Activated CD4-positive, alpha-beta T cell treated with anti-CD3 and anti-CD28 coated beads for 36 hours (primary cell): ENCODE measurements at regions of chr4 and their contacts with region 1.

Region 1: GRCh38 chr4:183261953-183262775 is 57.9 kb downstream of the CLDN22 start:
- DNase-seq: peak; percentile 90
- ATAC-seq: peak; percentile 97
- H3K4me3 Mint-ChIP-seq: no peak overlapping the region
- H3K27ac Mint-ChIP-seq: no peak overlapping the region
- H3K4me1 Mint-ChIP-seq: peaks cover 5% of the 10 kb centered on the region
- H3K27me3 Mint-ChIP-seq: no peaks in the 10 kb centered on the region

Region 2: GRCh38 chr4:182478475-182478874 is 783.7 kb before region 1 on chr4:
- CTCF ChIA-PET with region 1: no interaction called
- POLR2A ChIA-PET with region 1: no interaction called
- intact Hi-C with region 1: loop called in 1 of 2 experiments (anchors 5 kb)
- DNase-seq: no peak
- ATAC-seq: no peak
- H3K4me3 Mint-ChIP-seq: no peak overlapping the region
- H3K27ac Mint-ChIP-seq: no peak overlapping the region
- H3K4me1 Mint-ChIP-seq: no peaks in the 10 kb centered on the region
- H3K27me3 Mint-ChIP-seq: no peaks in the 10 kb centered on the region

Region 3: DNA sequence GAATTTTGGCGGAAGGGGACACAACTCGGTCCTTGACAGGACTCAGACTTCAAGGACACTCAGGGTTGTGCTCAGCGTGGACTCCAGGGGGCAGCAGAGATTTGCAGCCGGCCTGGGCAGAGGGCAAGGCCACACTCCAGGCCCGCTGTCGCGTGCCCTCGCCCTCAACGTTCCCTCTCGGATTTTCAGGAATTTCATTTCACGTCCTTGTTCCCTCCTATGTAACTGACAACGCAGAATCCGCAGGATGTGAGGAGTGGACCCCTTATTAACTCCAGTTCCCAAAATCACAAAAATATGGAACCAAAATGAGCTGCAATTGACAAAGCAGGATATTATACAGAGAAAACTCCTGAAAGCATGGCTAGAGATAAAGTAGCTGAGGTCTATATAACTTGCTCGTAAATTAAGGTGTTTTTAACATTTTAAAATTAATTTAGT is 323.9 kb before region 1 on chr4:
- CTCF ChIA-PET with region 1: interaction called, 56 read pairs
- POLR2A ChIA-PET with region 1: no interaction called
- intact Hi-C with region 1: loop called (anchors 1 kb)
- DNase-seq: peak; percentile 83
- ATAC-seq: peak; percentile 98
- H3K4me3 Mint-ChIP-seq: no peak overlapping the region
- H3K27ac Mint-ChIP-seq: no peak overlapping the region
- H3K4me1 Mint-ChIP-seq: peaks cover 2% of the 10 kb centered on the region
- H3K27me3 Mint-ChIP-seq: peaks cover 7% of the 10 kb centered on the region

Region 4: DNA sequence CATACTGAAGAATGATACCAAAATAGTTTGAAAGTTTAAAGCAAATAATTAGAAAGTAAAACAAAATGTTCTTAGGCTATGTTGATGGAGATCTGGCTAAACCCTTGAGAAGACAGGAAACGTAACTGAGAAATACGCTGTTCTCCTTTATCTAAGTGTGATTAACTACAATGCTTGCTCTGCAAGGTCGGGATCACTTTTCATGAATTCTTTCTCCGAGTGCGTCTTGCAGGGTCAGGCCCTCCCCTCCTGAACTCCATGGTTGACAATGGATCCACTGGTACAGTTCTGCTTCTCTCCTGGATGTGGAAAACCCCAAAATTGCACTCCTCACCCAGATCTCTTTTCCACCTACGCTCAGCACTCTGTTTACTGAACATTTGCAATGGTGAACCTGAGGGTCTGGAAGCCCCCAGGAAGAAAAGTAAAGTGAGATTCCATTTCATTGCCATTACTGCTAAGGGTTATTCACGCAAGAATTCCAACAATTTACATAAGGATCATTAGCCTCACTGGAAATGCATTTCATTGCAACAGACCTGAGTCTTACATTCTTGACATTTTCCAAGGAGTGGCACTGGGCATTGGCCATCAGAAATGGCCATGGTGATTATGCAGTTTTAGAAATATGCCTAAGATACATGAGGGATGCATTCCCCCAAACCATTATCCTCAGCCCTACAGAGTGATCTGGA is 187.7 kb before region 1 on chr4:
- CTCF ChIA-PET with region 1: interaction called, 78 read pairs
- POLR2A ChIA-PET with region 1: no interaction called
- intact Hi-C with region 1: loop called (anchors 1 kb)
- DNase-seq: no peak
- ATAC-seq: no peak
- H3K4me3 Mint-ChIP-seq: no peak overlapping the region
- H3K27ac Mint-ChIP-seq: no peak overlapping the region
- H3K4me1 Mint-ChIP-seq: no peaks in the 10 kb centered on the region
- H3K27me3 Mint-ChIP-seq: peaks cover 6% of the 10 kb centered on the region

Region 5: DNA sequence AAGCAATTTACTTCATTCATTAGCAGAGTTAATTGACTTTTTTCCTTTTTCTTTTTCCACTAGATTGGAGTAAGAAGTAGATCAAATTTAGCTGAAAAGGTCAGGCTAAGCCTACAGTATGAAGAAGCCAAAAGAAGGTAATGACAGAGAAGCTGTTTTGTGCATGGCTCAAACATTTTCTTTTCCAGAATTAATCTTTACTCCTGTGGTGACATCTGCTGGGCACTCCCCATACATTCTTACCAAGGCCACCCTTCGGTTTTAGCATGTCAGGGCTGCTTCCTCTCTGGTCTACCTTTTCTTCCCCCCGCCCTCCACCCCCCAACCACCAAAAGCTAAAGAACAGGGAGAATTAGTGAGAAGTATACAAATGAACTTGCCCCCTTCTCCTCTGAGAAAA is 12.3 kb before region 1 on chr4:
- CTCF ChIA-PET with region 1: interaction called, 47 read pairs
- POLR2A ChIA-PET with region 1: no interaction called
- intact Hi-C with region 1: no loop called
- DNase-seq: peak; percentile 32
- ATAC-seq: peak; percentile 53
- H3K4me3 Mint-ChIP-seq: no peak overlapping the region
- H3K27ac Mint-ChIP-seq: no peak overlapping the region
- H3K4me1 Mint-ChIP-seq: no peaks in the 10 kb centered on the region
- H3K27me3 Mint-ChIP-seq: no peaks in the 10 kb centered on the region

Region 6: GRCh38 chr4:183398227-183399125 is 136.3 kb after region 1 on chr4:
- CTCF ChIA-PET with region 1: no interaction called
- POLR2A ChIA-PET with region 1: no interaction called
- intact Hi-C with region 1: loop called (anchors 1 to 10 kb)
- DNase-seq: peak; percentile 83
- ATAC-seq: peak; percentile 84
- H3K4me3 Mint-ChIP-seq: peak overlapping the region; percentile 69
- H3K27ac Mint-ChIP-seq: peak overlapping the region; percentile 90
- H3K4me1 Mint-ChIP-seq: peaks cover 30% of the 10 kb centered on the region
- H3K27me3 Mint-ChIP-seq: peaks cover 5% of the 10 kb centered on the region

Region 7: GRCh38 chr4:183407128-183407585 is 145.0 kb after region 1 on chr4:
- CTCF ChIA-PET with region 1: interaction called, 8 read pairs
- POLR2A ChIA-PET with region 1: no interaction called
- intact Hi-C with region 1: loop called (anchors 1 to 10 kb)
- DNase-seq: peak; percentile 95
- ATAC-seq: peak; percentile 98
- H3K4me3 Mint-ChIP-seq: peak overlapping the region; percentile 78
- H3K27ac Mint-ChIP-seq: peak overlapping the region; percentile 88
- H3K4me1 Mint-ChIP-seq: peaks cover 18% of the 10 kb centered on the region
- H3K27me3 Mint-ChIP-seq: no peaks in the 10 kb centered on the region